ENCODE measurements at regions of chr1 and their contacts with region 1.

Region 1: DNA sequence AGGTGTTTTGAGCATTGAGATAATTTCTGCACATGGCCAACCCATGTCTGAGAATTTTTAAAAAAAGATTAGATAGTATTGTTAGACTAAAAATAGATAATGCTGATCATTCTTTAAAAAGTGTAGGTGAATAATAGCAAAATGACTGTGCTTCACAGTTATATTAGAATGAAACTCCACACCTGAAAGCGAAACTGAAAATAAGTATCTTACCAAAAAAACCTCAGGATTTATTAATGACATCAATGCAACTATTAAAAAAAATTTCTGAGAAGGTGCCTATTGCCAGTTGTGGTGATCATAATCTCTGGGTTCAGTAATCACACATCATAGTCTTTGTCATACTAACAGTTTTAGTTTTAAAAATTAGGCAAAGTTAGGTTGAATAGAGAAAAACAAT is 36.5 kb downstream of the PLA2G4A start:
- DNase-seq: no peak
- H3K4me3 ChIP-seq: no peak overlapping the region
- H3K27ac ChIP-seq: no peak overlapping the region
- H3K4me1 ChIP-seq: no peaks in the 10 kb centered on the region
- H3K27me3 ChIP-seq: no peaks in the 10 kb centered on the region
- CTCF ChIP-seq: no peak
- POLR2A ChIP-seq: no peak

Region 2: GRCh38 chr1:186559601-186560116 is 305.6 kb before region 1 on chr1:
- CTCF ChIA-PET with region 1: no interaction called
- POLR2A ChIA-PET with region 1: interaction called, 11 read pairs
- dilution Hi-C with region 1: no loop called
- intact Hi-C with region 1: no loop called
- DNase-seq: no peak
- H3K4me3 ChIP-seq: no peak overlapping the region
- H3K27ac ChIP-seq: no peak overlapping the region
- H3K4me1 ChIP-seq: no peaks in the 10 kb centered on the region
- H3K27me3 ChIP-seq: no peaks in the 10 kb centered on the region
- CTCF ChIP-seq: no peak
- POLR2A ChIP-seq: no peak